ENCODE measurements at regions of chr10 and their contacts with region 1.

Region 1: DNA sequence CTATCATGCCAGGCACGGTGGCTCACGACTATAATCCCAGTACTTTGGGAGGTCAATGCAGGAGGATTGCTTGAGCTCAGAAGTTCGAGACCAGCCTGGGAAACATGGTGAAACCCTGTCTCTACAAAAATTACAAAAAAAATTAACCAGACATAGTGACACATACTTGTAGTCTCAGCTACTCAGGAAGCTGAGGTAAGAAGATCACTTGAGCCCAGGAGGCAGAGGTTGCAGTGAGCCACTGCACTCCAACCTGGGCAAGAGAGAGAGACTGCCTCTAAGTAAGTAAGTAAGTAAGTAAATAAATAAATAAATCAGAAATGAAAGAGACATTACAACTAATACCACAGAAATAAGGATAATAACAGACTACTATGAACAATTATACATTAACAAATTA is 36.2 kb downstream of the PDLIM1 start:
- DNase-seq: no peak
- H3K4me3 ChIP-seq: no peak overlapping the region
- H3K27ac ChIP-seq: peak overlapping the region in 1 of 2 donors; percentile 2
- H3K4me1 ChIP-seq: no peaks in the 10 kb centered on the region
- H3K27me3 ChIP-seq: no peaks in the 10 kb centered on the region
- CTCF ChIP-seq: no peak
- POLR2A ChIP-seq: no peak

Region 2: GRCh38 chr10:95524358-95525032 is 269.9 kb after region 1 on chr10:
- intact Hi-C with region 1: loop called (anchors 5 kb)
- DNase-seq: no peak
- H3K4me3 ChIP-seq: no peak overlapping the region
- H3K27ac ChIP-seq: peak overlapping the region; percentile 4
- H3K4me1 ChIP-seq: peaks cover 0 to 9% of the 10 kb centered on the region in 2 donors
- H3K27me3 ChIP-seq: no peaks in the 10 kb centered on the region
- CTCF ChIP-seq: no peak
- POLR2A ChIP-seq: no peak

Region 3: GRCh38 chr10:95651346-95652060 is 396.9 kb after region 1 on chr10:
- intact Hi-C with region 1: no loop called
- DNase-seq: no peak
- H3K4me3 ChIP-seq: no peak overlapping the region
- H3K27ac ChIP-seq: no peak overlapping the region
- H3K4me1 ChIP-seq: no peaks in the 10 kb centered on the region
- H3K27me3 ChIP-seq: no peaks in the 10 kb centered on the region
- CTCF ChIP-seq: no peak
- POLR2A ChIP-seq: no peak

Measured in breast epithelium (tissue), 4 donors.